Endothelial cell of umbilical vein (primary cell): ENCODE measurements at regions of chr17 and their contacts with region 1.

Region 1: GRCh38 chr17:49687878-49688491 is 10.1 kb upstream of the SPOP start:
- DNase-seq: peak; percentile 96
- H3K4me3 ChIP-seq: no peak overlapping the region
- H3K27ac ChIP-seq: peak overlapping the region; percentile 87
- H3K4me1 ChIP-seq: peaks cover 42% of the 10 kb centered on the region
- H3K27me3 ChIP-seq: no peaks in the 10 kb centered on the region
- CTCF ChIP-seq: no peak
- POLR2A ChIP-seq: peak; percentile 70

Region 2: GRCh38 chr17:49637050-49637449 is 50.9 kb before region 1 on chr17:
- CTCF ChIA-PET with region 1: interaction called, 6 read pairs
- POLR2A ChIA-PET with region 1: no interaction called
- dilution Hi-C with region 1: no loop called
- intact Hi-C with region 1: loop called (anchors 2 kb)
- DNase-seq: peak; percentile 26
- H3K4me3 ChIP-seq: no peak overlapping the region
- H3K27ac ChIP-seq: peak overlapping the region; percentile 28
- H3K4me1 ChIP-seq: peaks cover 17% of the 10 kb centered on the region
- H3K27me3 ChIP-seq: no peaks in the 10 kb centered on the region
- CTCF ChIP-seq: no peak
- POLR2A ChIP-seq: no peak

Region 3: GRCh38 chr17:49739641-49740271 is 51.8 kb after region 1 on chr17:
- CTCF ChIA-PET with region 1: no interaction called
- POLR2A ChIA-PET with region 1: no interaction called
- dilution Hi-C with region 1: no loop called
- intact Hi-C with region 1: no loop called
- DNase-seq: peak; percentile 16
- H3K4me3 ChIP-seq: no peak overlapping the region
- H3K27ac ChIP-seq: no peak overlapping the region
- H3K4me1 ChIP-seq: no peaks in the 10 kb centered on the region
- H3K27me3 ChIP-seq: no peaks in the 10 kb centered on the region
- CTCF ChIP-seq: no peak
- POLR2A ChIP-seq: no peak